WTC11 (cell line): ENCODE measurements at regions of chr14 and their contacts with region 1.

Region 1: DNA sequence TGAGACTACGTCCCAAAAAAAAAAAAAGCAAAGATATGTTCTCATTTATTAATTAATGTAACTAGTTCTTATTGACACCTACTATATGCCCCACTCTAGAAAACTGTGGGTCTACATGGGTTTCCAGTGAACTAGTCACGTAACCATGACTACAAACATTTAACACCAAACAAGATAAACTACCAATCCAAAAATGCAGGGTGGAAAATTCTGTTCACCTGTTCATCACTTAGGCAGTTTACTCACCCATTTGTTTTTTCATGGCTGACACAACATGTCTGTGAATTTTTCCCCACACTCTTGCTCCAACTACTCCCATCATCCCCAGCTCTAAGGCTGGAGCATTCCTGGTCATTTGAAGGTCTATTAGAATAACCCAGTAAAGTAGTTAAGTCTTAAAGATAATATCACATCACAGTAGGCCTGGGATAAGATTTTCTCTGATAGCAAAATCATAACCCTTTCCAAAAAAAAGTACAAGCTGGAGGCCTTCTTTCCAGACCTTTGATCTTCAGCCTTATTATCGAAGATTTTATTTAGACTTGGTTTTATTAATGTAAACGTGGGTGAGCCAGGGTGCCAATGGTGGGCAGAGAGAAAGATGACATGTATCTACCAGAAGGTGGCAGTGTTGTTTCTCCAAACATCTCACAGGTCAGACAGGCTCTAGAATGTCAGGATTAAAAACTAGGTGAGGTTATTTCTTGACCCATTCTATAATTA is 61.6 kb upstream of the DAAM1 start:
- DNase-seq: no peak
- ATAC-seq: peak; percentile 90
- H3K4me3 Mint-ChIP-seq: no peak overlapping the region
- H3K27ac Mint-ChIP-seq: no peak overlapping the region
- H3K4me1 Mint-ChIP-seq: no peaks in the 10 kb centered on the region
- H3K27me3 Mint-ChIP-seq: no peaks in the 10 kb centered on the region
- CTCF ChIP-seq: peak; percentile 33; the same call in 1 of the 2 replicates

Region 2: DNA sequence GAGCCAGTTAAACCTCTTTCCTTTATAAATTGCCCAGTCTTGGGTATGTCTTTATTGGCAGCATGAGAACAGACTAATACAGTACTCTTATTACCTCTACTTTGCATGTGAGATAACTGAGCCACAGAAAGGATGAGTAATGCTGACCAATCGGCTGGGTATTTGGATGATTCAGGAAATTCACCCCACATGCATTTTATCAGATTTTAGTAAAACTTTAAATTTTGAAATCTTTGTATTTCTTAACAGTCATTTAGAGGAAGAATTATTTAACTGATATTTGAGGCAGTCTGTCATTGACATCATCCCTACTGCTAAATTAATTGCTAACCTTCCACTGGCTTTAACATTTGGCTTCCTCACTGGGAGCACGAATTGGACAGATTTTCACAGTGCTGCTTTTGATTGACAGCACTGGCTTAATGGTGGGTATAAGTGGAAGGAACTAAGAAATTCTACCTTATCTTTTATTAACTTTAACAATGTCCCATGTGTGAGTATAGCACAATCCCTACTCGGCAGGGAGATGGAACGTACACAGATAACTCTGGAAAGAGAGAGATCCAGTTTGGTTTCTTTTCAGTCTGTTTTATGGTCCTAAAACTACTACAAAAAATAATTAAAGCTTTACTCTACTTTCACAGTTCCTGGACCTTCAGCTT is 228.1 kb before region 1 on chr14:
- CTCF ChIA-PET with region 1: no interaction called
- POLR2A ChIA-PET with region 1: no interaction called
- DNase-seq: no peak
- ATAC-seq: no peak
- H3K4me3 Mint-ChIP-seq: no peak overlapping the region
- H3K27ac Mint-ChIP-seq: no peak overlapping the region
- H3K4me1 Mint-ChIP-seq: peaks cover 3% of the 10 kb centered on the region
- H3K27me3 Mint-ChIP-seq: no peaks in the 10 kb centered on the region; the same call in 1 of the 2 replicates
- CTCF ChIP-seq: no peak

Region 3: GRCh38 chr14:59428581-59429012 is 301.7 kb after region 1 on chr14:
- CTCF ChIA-PET with region 1: interaction called, 5 read pairs
- POLR2A ChIA-PET with region 1: interaction called, 12 read pairs
- DNase-seq: no peak
- ATAC-seq: no peak
- H3K4me3 Mint-ChIP-seq: no peak overlapping the region
- H3K27ac Mint-ChIP-seq: no peak overlapping the region
- H3K4me1 Mint-ChIP-seq: peaks cover 9% of the 10 kb centered on the region
- H3K27me3 Mint-ChIP-seq: no peaks in the 10 kb centered on the region
- CTCF ChIP-seq: no peak

Region 4: GRCh38 chr14:59439256-59439965 is 312.5 kb after region 1 on chr14:
- CTCF ChIA-PET with region 1: interaction called, 14 read pairs
- POLR2A ChIA-PET with region 1: no interaction called
- DNase-seq: no peak
- ATAC-seq: peak; percentile 58
- H3K4me3 Mint-ChIP-seq: no peak overlapping the region
- H3K27ac Mint-ChIP-seq: no peak overlapping the region
- H3K4me1 Mint-ChIP-seq: no peaks in the 10 kb centered on the region
- H3K27me3 Mint-ChIP-seq: no peaks in the 10 kb centered on the region
- CTCF ChIP-seq: no peak